ENCODE measurements at regions of chr1 and their contacts with region 1.

Region 1: GRCh38 chr1:22105611-22106207 is 37.2 kb downstream of the WNT4 start:
- DNase-seq: peak in 7 of 9 donors; percentile 34 to 61 (median 51)
- ATAC-seq: peak; percentile 79
- H3K4me3 ChIP-seq: peak overlapping the region; percentile 2
- H3K4me3 Mint-ChIP-seq: peak overlapping the region; percentile 22 to 79 (median 48)
- H3K27ac ChIP-seq: peak overlapping the region; percentile 24
- H3K27ac Mint-ChIP-seq: peak overlapping the region; percentile 70 to 94 (median 88)
- H3K4me1 ChIP-seq: peaks cover 25 to 41% of the 10 kb centered on the region in 2 donors
- H3K4me1 Mint-ChIP-seq: peaks cover 49 to 86% (median 72%) of the 10 kb centered on the region in 7 donors
- H3K27me3 ChIP-seq: no peaks in the 10 kb centered on the region
- H3K27me3 Mint-ChIP-seq: no peaks in the 10 kb centered on the region

Region 2: GRCh38 chr1:22001409-22001808 is 104.3 kb before region 1 on chr1 and contains the start of gene CELA3A:
- CTCF ChIA-PET with region 1: no interaction called
- POLR2A ChIA-PET with region 1: no interaction called
- intact Hi-C with region 1: no loop called
- DNase-seq: no peak
- ATAC-seq: no peak
- H3K4me3 ChIP-seq: no peak within 1 kb of the TSS
- H3K4me3 Mint-ChIP-seq: no peak within 1 kb of the TSS
- H3K27ac ChIP-seq: no peak within 1 kb of the TSS
- H3K27ac Mint-ChIP-seq: peak within 1 kb of the TSS in 1 of 9 donors; percentile 90
- H3K4me1 ChIP-seq: no peaks in the 10 kb centered on the region
- H3K4me1 Mint-ChIP-seq: peaks cover 0 to 2% (median 0%) of the 10 kb centered on the region in 7 donors
- H3K27me3 ChIP-seq: no peaks in the 10 kb centered on the region
- H3K27me3 Mint-ChIP-seq: no peaks in the 10 kb centered on the region
- total RNA-seq, gene CELA3A: not detected

Region 3: GRCh38 chr1:22018583-22019559 is 86.8 kb before region 1 on chr1:
- CTCF ChIA-PET with region 1: interaction called, 9 read pairs
- POLR2A ChIA-PET with region 1: interaction called, 12 read pairs
- intact Hi-C with region 1: loop called in 1 of 2 experiments (anchors 1 kb)
- DNase-seq: peak; percentile 31 to 86 (median 68)
- ATAC-seq: peak; percentile 96
- H3K4me3 ChIP-seq: no peak overlapping the region
- H3K4me3 Mint-ChIP-seq: peak overlapping the region; percentile 44 to 77 (median 66)
- H3K27ac ChIP-seq: peak overlapping the region; percentile 47
- H3K27ac Mint-ChIP-seq: peak overlapping the region; percentile 83 to 99 (median 95)
- H3K4me1 ChIP-seq: peaks cover 22 to 27% of the 10 kb centered on the region in 2 donors
- H3K4me1 Mint-ChIP-seq: peaks cover 20 to 32% (median 30%) of the 10 kb centered on the region in 7 donors
- H3K27me3 ChIP-seq: no peaks in the 10 kb centered on the region
- H3K27me3 Mint-ChIP-seq: peaks cover 0 to 3% (median 0%) of the 10 kb centered on the region in 5 donors

Region 4: GRCh38 chr1:22045604-22046228 is 60.0 kb before region 1 on chr1:
- CTCF ChIA-PET with region 1: no interaction called
- POLR2A ChIA-PET with region 1: no interaction called
- intact Hi-C with region 1: no loop called
- DNase-seq: no peak
- ATAC-seq: no peak
- H3K4me3 ChIP-seq: no peak overlapping the region
- H3K4me3 Mint-ChIP-seq: peak overlapping the region in 5 of 10 donors; percentile 0 to 32 (median 3)
- H3K27ac ChIP-seq: no peak overlapping the region
- H3K27ac Mint-ChIP-seq: peak overlapping the region; percentile 0 to 71 (median 21)
- H3K4me1 ChIP-seq: peaks cover 14 to 48% of the 10 kb centered on the region in 2 donors
- H3K4me1 Mint-ChIP-seq: peaks cover 42 to 76% (median 56%) of the 10 kb centered on the region in 7 donors
- H3K27me3 ChIP-seq: no peaks in the 10 kb centered on the region
- H3K27me3 Mint-ChIP-seq: no peaks in the 10 kb centered on the region

Region 5: DNA sequence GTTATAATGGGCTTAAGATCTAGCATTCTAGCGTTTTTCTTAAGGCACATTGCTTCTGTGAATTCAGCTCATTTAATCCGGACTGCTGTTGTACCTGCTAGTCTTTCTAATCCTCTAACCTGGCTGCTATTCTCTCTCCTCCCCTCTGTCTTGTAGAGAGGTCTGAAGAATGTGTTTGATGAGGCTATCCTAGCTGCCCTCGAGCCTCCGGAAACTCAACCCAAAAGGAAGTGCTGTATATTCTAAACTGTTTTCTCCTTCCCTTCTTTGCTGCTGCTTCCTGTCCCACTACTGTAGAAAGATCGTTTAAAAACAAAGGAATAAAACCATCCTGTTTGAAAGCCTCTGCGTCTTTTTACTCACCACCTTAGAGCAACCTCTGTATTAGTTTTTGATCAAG is 15.9 kb before region 1 on chr1:
- CTCF ChIA-PET with region 1: interaction called, 4 read pairs
- POLR2A ChIA-PET with region 1: interaction called, 10 read pairs
- intact Hi-C with region 1: loop called (anchors 1 kb)
- DNase-seq: peak in 5 of 9 donors; percentile 12 to 19 (median 16)
- ATAC-seq: peak; percentile 35
- H3K4me3 ChIP-seq: peak overlapping the region; percentile 16
- H3K4me3 Mint-ChIP-seq: peak overlapping the region; percentile 76 to 87 (median 78)
- H3K27ac ChIP-seq: peak overlapping the region; percentile 63
- H3K27ac Mint-ChIP-seq: peak overlapping the region; percentile 68 to 93 (median 78)
- H3K4me1 ChIP-seq: peaks cover 48 to 57% of the 10 kb centered on the region in 2 donors
- H3K4me1 Mint-ChIP-seq: peaks cover 69 to 97% (median 93%) of the 10 kb centered on the region in 7 donors
- H3K27me3 ChIP-seq: no peaks in the 10 kb centered on the region
- H3K27me3 Mint-ChIP-seq: no peaks in the 10 kb centered on the region

Region 6: GRCh38 chr1:22275721-22276395 is 170.1 kb after region 1 on chr1:
- CTCF ChIA-PET with region 1: no interaction called
- POLR2A ChIA-PET with region 1: no interaction called
- intact Hi-C with region 1: loop called in 1 of 2 experiments (anchors 2 kb)
- DNase-seq: peak in 6 of 9 donors; percentile 12 to 43 (median 18)
- ATAC-seq: peak; percentile 48
- H3K4me3 ChIP-seq: no peak overlapping the region
- H3K4me3 Mint-ChIP-seq: no peak overlapping the region
- H3K27ac ChIP-seq: no peak overlapping the region
- H3K27ac Mint-ChIP-seq: no peak overlapping the region
- H3K4me1 ChIP-seq: no peaks in the 10 kb centered on the region
- H3K4me1 Mint-ChIP-seq: no peaks in the 10 kb centered on the region
- H3K27me3 ChIP-seq: peaks cover 0 to 3% of the 10 kb centered on the region in 2 donors
- H3K27me3 Mint-ChIP-seq: peaks cover 8 to 23% (median 13%) of the 10 kb centered on the region in 5 donors

Region 7: GRCh38 chr1:22416555-22417454 is 311.1 kb after region 1 on chr1:
- CTCF ChIA-PET with region 1: no interaction called
- POLR2A ChIA-PET with region 1: no interaction called
- intact Hi-C with region 1: loop called (anchors 1 to 2 kb)
- DNase-seq: peak; percentile 42 to 76 (median 64)
- ATAC-seq: peak; percentile 86
- H3K4me3 ChIP-seq: no peak overlapping the region
- H3K4me3 Mint-ChIP-seq: no peak overlapping the region
- H3K27ac ChIP-seq: no peak overlapping the region
- H3K27ac Mint-ChIP-seq: peak overlapping the region in 1 of 9 donors; percentile 25
- H3K4me1 ChIP-seq: no peaks in the 10 kb centered on the region
- H3K4me1 Mint-ChIP-seq: peaks cover 0 to 7% (median 3%) of the 10 kb centered on the region in 7 donors
- H3K27me3 ChIP-seq: peaks cover 0 to 8% of the 10 kb centered on the region in 2 donors
- H3K27me3 Mint-ChIP-seq: peaks cover 30 to 39% (median 35%) of the 10 kb centered on the region in 5 donors

Region 8: GRCh38 chr1:22641906-22642636 is 536.4 kb after region 1 on chr1:
- CTCF ChIA-PET with region 1: interaction called, 3 read pairs
- POLR2A ChIA-PET with region 1: no interaction called
- intact Hi-C with region 1: loop called in 1 of 2 experiments (anchors 1 kb)
- DNase-seq: peak; percentile 24 to 71 (median 61)
- ATAC-seq: peak; percentile 80
- H3K4me3 ChIP-seq: no peak overlapping the region
- H3K4me3 Mint-ChIP-seq: no peak overlapping the region
- H3K27ac ChIP-seq: no peak overlapping the region
- H3K27ac Mint-ChIP-seq: no peak overlapping the region
- H3K4me1 ChIP-seq: no peaks in the 10 kb centered on the region
- H3K4me1 Mint-ChIP-seq: peaks cover 0 to 4% (median 0%) of the 10 kb centered on the region in 7 donors
- H3K27me3 ChIP-seq: no peaks in the 10 kb centered on the region
- H3K27me3 Mint-ChIP-seq: peaks cover 0 to 27% (median 16%) of the 10 kb centered on the region in 5 donors

Measured in naive thymus-derived CD4-positive, alpha-beta T cell (primary cell).